Sciatic nerve (tissue), 2 donors: ENCODE measurements at regions of chr5 and their contacts with region 1.

Region 1: DNA sequence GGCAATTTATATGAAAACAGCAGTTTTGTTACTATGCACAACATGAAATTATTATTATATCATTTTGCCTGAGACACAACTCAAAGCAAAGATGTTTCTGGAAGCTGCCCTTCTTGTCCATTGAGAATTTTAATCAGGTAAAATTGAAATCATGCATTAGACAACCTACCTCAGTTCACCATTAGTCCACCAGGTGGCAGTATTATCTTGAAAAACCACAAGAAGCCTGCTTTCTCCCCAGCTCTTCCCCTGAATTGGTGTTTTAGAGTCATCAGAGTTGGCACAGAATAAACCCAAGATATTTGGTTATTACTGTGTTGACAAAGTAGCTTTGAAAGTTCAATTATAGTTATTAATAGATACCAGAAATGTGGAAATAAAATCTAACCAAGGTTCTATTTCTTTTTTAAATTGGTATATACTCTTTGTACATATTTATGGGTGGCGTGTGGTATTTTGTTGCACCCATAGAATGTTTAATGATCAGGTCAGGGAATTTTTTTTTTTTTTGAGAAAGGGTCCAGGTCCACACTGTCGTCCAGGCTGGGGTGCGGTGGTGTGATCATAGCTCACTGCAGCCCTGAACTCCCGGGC is 25.7 kb downstream of the UTP15 start:
- DNase-seq: no peak
- ATAC-seq: peak; percentile 90

Region 2: GRCh38 chr5:72441861-72442540 is 1149.2 kb before region 1 on chr5:
- intact Hi-C with region 1: no loop called
- DNase-seq: no peak
- ATAC-seq: no peak

Region 3: GRCh38 chr5:73792687-73793320 is 201.6 kb after region 1 on chr5:
- intact Hi-C with region 1: loop called (anchors 5 kb)
- DNase-seq: peak; percentile 83
- ATAC-seq: peak; percentile 85

Region 4: GRCh38 chr5:74640450-74640953 is 1049.3 kb after region 1 on chr5 and contains the start of gene ENC1:
- intact Hi-C with region 1: loop called (anchors 10 kb)
- DNase-seq: peak; percentile 88
- ATAC-seq: peak; percentile 91
- total RNA-seq, gene ENC1: 6.6 TPM